H1 (cell line): ENCODE measurements at regions of chr1 and their contacts with region 1.

Region 1: DNA sequence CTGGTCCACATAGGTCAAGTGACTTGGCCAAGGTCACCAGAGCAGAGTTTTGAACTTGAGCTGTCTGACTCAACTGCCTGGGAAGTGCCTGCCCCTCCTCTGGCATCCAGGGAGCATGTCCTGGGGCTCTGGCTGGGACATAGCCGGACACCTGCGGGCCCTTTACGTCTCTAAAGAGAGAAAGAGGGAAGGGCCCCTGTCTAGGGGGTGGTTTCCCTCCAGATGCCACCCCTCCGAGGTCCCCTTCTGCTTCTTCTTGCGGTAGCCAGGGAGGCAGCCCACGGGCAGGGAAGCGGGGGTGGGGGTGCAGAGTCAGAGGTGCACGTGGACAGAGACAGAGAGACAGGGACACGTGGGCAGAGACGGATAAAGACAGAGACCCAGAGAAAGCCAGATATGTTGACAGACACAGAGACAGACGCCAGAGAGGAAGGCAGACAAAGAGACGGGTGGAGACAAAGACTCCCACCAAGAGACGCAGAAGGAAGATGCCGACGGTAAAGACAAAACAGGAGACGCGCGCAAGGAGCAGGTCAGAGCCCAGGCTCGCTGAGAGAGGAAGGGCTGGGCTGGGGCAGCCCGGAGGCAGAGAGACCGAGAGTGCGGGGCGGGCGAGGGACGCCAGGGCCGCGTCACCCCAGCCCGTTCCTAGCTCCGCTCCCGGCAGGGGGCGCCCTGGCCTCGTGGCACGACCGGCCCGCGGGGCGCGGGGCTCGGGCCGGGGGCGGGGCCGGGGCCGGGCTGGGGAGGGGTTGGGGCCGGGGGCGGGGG is 458 bp upstream of the ALPL start:
- DNase-seq: peak; percentile 67 to 97
- H3K4me3 ChIP-seq: peak overlapping the region; percentile 14 to 78 (median 42); a peak in 6 of 8 replicates
- H3K27ac ChIP-seq: no peak overlapping the region
- H3K4me1 ChIP-seq: peaks cover 14 to 22% (median 17%) of the 10 kb centered on the region in 4 experiments
- H3K27me3 ChIP-seq: peaks cover 0 to 17% (median 10%) of the 10 kb centered on the region in 4 experiments; a peak in 6 of 7 replicates
- CTCF ChIP-seq: peak; percentile 69 to 83 (median 79)
- EP300 ChIP-seq: no peak
- POLR2A ChIP-seq: peak in 1 of 2 experiments; percentile 45; a peak in 1 of 3 replicates
- RAD21 ChIP-seq: peak; percentile 59 to 77

Region 2: GRCh38 chr1:21232044-21232443 is 276.7 kb before region 1 on chr1:
- CTCF ChIA-PET with region 1: interaction called, 12 read pairs
- POLR2A ChIA-PET with region 1: no interaction called
- DNase-seq: peak in 1 of 2 experiments; percentile 59
- H3K4me3 ChIP-seq: no peak overlapping the region
- H3K27ac ChIP-seq: no peak overlapping the region
- H3K4me1 ChIP-seq: no peaks in the 10 kb centered on the region
- H3K27me3 ChIP-seq: no peaks in the 10 kb centered on the region
- CTCF ChIP-seq: peak; percentile 25 to 75 (median 75)
- EP300 ChIP-seq: no peak
- POLR2A ChIP-seq: no peak
- RAD21 ChIP-seq: peak; percentile 89 to 90

Region 3: DNA sequence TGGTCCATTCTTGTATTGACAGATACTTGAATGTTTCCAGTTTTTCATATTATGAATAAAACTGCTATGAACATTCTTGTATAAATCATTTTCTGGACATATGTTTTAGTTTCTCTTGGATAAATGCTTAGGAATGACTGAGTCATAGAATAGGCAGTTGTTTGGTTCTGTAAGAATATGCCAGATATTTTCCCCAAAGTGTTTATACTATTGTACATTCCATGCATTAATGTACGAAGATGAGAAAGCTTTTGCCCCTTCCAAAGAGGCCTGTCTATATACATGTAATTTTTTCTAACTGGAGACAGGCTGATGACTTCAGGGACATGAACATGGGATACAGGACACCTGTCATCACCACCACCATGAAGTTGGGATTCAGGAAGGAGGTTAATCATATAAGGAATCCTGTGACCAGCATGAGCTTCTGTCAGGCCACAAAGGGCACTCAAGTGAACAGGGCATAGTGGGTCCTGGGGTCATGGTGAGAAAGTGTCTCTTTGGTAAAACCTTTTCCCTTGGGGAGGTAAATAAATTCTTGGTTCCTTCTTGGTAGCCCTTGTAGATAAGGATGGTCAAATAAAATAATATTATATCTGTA is 57.5 kb before region 1 on chr1:
- CTCF ChIA-PET with region 1: no interaction called
- POLR2A ChIA-PET with region 1: no interaction called
- DNase-seq: no peak
- H3K4me3 ChIP-seq: no peak overlapping the region
- H3K27ac ChIP-seq: no peak overlapping the region
- H3K4me1 ChIP-seq: no peaks in the 10 kb centered on the region
- H3K27me3 ChIP-seq: no peaks in the 10 kb centered on the region
- CTCF ChIP-seq: no peak
- EP300 ChIP-seq: no peak
- POLR2A ChIP-seq: no peak
- RAD21 ChIP-seq: no peak

Region 4: DNA sequence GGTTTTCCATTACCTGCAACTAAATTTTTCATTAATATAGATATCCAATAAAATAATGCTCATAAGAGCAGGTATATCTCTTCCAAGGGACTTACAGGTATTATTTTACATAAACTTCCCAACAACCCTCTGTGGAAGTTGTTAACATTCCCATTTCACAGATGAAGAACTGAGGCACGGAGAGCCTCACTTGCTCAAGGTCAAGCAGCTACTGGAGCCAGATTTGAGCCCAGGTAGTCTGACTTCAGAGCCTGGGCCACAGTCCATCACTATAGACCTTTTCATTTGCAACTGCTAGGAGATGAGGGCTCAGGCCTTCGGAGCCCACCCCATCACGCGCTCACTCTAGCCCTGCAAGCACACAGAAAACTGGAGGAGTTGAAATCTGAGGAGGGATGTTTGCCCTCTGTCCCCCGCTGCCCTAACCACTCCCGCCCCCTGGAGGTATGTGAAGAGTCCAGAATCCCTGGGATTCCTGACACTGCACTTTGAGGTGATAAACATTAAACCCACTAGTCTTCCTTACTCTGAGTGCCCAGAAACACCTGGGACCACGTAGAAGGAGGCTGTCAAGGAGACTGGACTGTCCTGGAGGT is 11.2 kb before region 1 on chr1:
- CTCF ChIA-PET with region 1: interaction called, 14 read pairs
- POLR2A ChIA-PET with region 1: no interaction called
- DNase-seq: peak in 1 of 2 experiments; percentile 70
- H3K4me3 ChIP-seq: no peak overlapping the region
- H3K27ac ChIP-seq: no peak overlapping the region
- H3K4me1 ChIP-seq: peaks cover 0 to 5% (median 4%) of the 10 kb centered on the region in 4 experiments; a peak in 6 of 7 replicates
- H3K27me3 ChIP-seq: no peaks in the 10 kb centered on the region; a peak in 1 of 7 replicates
- CTCF ChIP-seq: peak; percentile 45 to 51 (median 49)
- EP300 ChIP-seq: no peak
- POLR2A ChIP-seq: no peak
- RAD21 ChIP-seq: peak; percentile 55 to 65

Region 5: DNA sequence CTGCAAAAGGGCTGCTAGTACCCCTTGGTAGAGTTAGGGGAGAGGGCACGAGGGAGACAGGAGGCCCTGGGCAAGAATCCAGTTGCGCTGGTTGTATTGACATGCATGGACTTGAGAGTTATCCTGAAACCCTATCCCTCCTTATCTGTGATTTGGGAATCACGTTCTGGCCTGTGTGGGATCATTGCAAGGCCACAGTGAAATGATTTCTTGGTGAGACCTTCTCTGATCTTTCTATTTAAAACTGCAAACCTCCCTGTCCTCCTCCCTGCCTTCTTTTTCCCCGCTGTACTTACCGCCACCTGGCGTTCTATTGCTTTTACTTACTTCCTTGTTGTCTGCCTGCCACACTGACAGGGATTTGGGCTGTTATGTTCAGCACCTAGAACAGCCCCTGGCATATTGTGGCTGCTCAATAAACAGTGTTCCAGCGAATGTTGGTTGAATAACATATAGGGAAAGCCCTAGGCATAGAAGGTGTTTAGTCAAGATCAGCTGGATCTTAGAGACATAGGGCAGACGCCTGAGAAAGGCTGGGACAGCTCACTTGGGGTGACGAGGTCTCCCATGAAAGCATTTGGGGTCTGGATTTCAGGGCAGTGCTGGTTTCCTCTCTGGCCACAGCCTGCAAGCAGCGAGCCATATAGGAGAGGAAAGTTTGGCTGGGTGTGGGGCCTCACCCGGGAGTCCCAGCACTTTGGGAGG is 26.1 kb after region 1 on chr1:
- CTCF ChIA-PET with region 1: interaction called, 372 read pairs
- POLR2A ChIA-PET with region 1: interaction called, 16 read pairs
- DNase-seq: no peak
- H3K4me3 ChIP-seq: no peak overlapping the region
- H3K27ac ChIP-seq: no peak overlapping the region
- H3K4me1 ChIP-seq: peaks cover 15 to 21% (median 18%) of the 10 kb centered on the region in 4 experiments
- H3K27me3 ChIP-seq: no peaks in the 10 kb centered on the region
- CTCF ChIP-seq: peak; percentile 43 to 71 (median 64)
- EP300 ChIP-seq: no peak
- POLR2A ChIP-seq: no peak
- RAD21 ChIP-seq: peak; percentile 49 to 73

Region 6: GRCh38 chr1:21573971-21574465 is 65.3 kb after region 1 on chr1:
- CTCF ChIA-PET with region 1: interaction called, 22 read pairs
- POLR2A ChIA-PET with region 1: interaction called, 5 read pairs
- DNase-seq: peak; percentile 57 to 82
- H3K4me3 ChIP-seq: no peak overlapping the region
- H3K27ac ChIP-seq: no peak overlapping the region
- H3K4me1 ChIP-seq: peaks cover 2 to 7% (median 4%) of the 10 kb centered on the region in 4 experiments; a peak in 6 of 7 replicates
- H3K27me3 ChIP-seq: no peaks in the 10 kb centered on the region; a peak in 2 of 7 replicates
- CTCF ChIP-seq: peak; percentile 70 to 87 (median 79)
- EP300 ChIP-seq: no peak
- POLR2A ChIP-seq: no peak
- RAD21 ChIP-seq: peak; percentile 92 to 95

Region 7: GRCh38 chr1:21673277-21673780 is 164.6 kb after region 1 on chr1:
- CTCF ChIA-PET with region 1: no interaction called
- POLR2A ChIA-PET with region 1: no interaction called
- DNase-seq: peak in 1 of 2 experiments; percentile 45
- H3K4me3 ChIP-seq: no peak overlapping the region
- H3K27ac ChIP-seq: no peak overlapping the region
- H3K4me1 ChIP-seq: peaks cover 0 to 21% (median 7%) of the 10 kb centered on the region in 4 experiments; a peak in 6 of 7 replicates
- H3K27me3 ChIP-seq: peaks cover 0 to 17% (median 12%) of the 10 kb centered on the region in 4 experiments; a peak in 5 of 7 replicates
- CTCF ChIP-seq: no peak
- EP300 ChIP-seq: no peak
- POLR2A ChIP-seq: peak in 1 of 2 experiments; percentile 16; a peak in 1 of 3 replicates
- RAD21 ChIP-seq: no peak